ENCODE measurements at regions of chr5 and their contacts with region 1.

Region 1: GRCh38 chr5:102223542-102224477 is 72.3 kb downstream of the SLCO4C1 start:
- H3K4me3 Mint-ChIP-seq: no peak overlapping the region
- H3K27ac Mint-ChIP-seq: no peak overlapping the region
- H3K4me1 Mint-ChIP-seq: no peaks in the 10 kb centered on the region
- H3K27me3 Mint-ChIP-seq: no peaks in the 10 kb centered on the region

Region 2: DNA sequence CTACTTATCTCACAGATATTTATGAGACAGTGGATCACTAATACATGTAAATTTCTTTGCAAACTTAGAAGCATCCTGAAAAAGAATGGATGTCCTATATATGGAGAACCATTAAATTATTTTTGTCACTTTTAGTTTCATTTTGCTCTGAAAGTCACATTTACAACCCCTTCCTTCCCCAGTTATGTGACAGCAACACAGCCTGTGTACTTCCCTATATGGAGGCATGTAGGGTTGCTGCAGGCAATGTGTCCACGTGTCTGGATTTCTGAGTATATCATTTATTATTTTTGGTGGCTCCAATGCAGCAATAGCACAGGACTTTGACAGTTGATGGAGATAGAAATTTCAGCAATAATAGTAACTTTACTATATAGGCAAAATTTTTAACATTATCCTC is 1477.1 kb before region 1 on chr5:
- intact Hi-C with region 1: no loop called
- H3K4me3 Mint-ChIP-seq: peak overlapping the region; percentile 32
- H3K27ac Mint-ChIP-seq: peak overlapping the region; percentile 69
- H3K4me1 Mint-ChIP-seq: peaks cover 7% of the 10 kb centered on the region
- H3K27me3 Mint-ChIP-seq: no peaks in the 10 kb centered on the region

Region 3: DNA sequence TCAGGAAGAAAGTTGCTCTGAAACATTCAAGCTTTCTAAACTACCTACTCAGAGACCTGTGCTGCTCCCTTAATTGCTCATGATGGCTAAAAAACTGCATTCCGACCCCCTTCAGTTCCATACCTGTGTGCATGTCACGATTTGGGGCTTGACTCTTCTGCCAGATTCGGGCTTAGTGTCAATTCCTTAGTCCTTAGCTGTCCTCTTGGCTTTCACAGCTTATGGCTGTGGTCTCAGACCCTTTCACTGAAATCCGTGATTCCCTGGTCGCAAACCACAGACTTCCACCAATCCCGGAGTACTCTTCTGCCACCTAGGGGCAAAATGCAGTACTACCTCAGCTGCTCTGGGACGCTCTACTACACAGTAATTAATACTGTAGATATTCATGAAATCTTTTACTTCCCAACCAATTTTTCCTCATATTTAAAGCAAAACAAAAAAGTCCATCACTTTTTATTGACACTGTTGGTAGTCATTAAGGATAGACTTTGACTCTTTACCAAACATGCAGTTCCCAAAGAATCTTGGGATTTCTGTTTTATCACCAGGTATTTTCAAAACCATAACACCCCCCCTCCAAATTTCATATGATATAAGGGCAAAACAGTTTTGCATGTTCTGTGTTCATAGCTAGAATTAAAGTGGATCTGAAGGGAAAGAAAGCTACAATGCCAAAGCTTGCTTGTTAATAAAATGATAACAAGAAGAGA is 545.2 kb before region 1 on chr5:
- intact Hi-C with region 1: loop called (anchors 10 kb)
- H3K4me3 Mint-ChIP-seq: no peak overlapping the region
- H3K27ac Mint-ChIP-seq: no peak overlapping the region
- H3K4me1 Mint-ChIP-seq: peaks cover 4% of the 10 kb centered on the region
- H3K27me3 Mint-ChIP-seq: no peaks in the 10 kb centered on the region

Region 4: GRCh38 chr5:102294996-102295395 is 71.2 kb after region 1 on chr5:
- intact Hi-C with region 1: no loop called
- H3K4me3 Mint-ChIP-seq: peak overlapping the region; percentile 84
- H3K27ac Mint-ChIP-seq: no peak overlapping the region
- H3K4me1 Mint-ChIP-seq: peaks cover 40% of the 10 kb centered on the region
- H3K27me3 Mint-ChIP-seq: peaks cover 10% of the 10 kb centered on the region